Lower lobe of right lung (tissue), 2 donors: ENCODE measurements at regions of chr17 and their contacts with region 1.

Region 1: DNA sequence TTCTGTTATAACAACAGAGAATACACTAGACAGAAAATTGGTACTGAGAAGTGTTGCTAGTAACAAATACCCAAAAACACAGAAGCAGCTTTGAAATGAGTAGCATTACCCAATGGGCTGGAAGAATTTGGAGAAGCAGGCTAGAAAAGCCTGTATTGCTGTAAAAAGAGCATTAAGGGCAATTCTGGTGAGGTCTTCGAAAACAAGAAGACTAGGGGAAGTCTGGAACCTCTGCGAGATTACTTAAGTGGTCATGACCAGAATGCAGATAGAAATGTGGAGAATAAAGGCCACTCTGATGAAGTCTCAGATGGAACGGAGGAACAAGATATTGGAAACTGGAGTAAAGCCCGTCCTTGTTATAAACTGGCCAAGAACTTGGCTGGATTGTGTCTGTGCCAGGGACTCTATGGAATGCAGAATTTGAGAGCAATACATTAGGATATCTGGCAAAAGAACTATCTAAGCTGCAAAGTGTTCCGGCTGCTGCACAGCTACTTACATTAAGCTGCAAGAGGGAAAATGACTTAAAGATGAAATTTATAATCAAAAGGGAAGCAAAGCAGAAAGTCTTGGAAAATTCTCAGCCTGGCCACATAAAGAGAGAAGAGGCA is 44.9 kb upstream of the PEMT start:
- DNase-seq: no peak
- ATAC-seq: no peak
- H3K4me3 ChIP-seq: no peak overlapping the region
- H3K27ac ChIP-seq: no peak overlapping the region
- H3K4me1 ChIP-seq: peaks cover 3% of the 10 kb centered on the region
- H3K27me3 ChIP-seq: no peaks in the 10 kb centered on the region
- CTCF ChIP-seq: no peak

Region 2: DNA sequence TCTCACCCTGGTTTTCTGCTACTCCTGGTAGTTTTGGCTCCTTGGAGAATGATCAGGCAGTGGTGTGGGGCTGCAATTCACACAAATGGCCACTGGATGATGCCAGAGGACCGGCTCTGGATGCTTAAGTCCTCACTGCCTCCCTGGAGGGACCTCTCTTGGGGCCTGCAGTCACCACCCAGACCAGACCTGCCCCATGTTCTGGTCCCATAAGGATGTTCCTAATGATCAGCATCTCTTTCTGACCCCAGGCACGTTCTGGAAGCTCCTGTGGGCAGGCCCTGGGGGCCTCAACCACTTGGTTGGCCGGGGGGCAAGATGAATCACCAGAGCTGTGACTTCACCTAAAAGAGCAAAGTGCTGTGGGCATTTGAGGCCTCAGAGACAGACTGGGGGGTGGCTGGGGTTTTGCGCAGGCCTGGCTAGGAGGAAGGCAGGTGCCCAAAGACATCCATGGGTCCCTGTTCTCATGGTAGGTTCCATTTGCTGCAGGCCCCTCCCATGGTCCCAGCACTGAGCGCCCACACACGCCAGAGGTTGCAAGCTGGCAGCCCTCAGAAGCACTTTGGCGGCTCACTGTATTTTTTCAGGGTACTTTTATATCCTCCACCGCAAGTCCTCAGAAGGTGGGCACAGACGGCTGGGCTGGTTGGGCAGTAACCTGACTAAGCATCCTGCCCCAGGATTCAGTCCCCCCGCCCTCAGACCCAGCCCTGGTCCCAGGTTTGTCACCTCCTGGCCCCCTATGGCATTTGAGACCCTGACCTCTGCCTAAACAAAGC is 280.0 kb before region 1 on chr17:
- intact Hi-C with region 1: loop called (anchors 5 kb)
- DNase-seq: peak; percentile 76
- ATAC-seq: peak; percentile 94 to 96
- H3K4me3 ChIP-seq: no peak overlapping the region
- H3K27ac ChIP-seq: no peak overlapping the region
- H3K4me1 ChIP-seq: peaks cover 10% of the 10 kb centered on the region
- H3K27me3 ChIP-seq: no peaks in the 10 kb centered on the region
- CTCF ChIP-seq: peak; percentile 98